Endothelial cell of umbilical vein (primary cell): ENCODE measurements at regions of chr2 and their contacts with region 1.

Region 1: GRCh38 chr2:218659258-218659987 is at the starts of genes BCS1L and ZNF142:
- DNase-seq: peak; percentile 88
- H3K4me3 ChIP-seq: peak within 1 kb of the TSS; percentile 74 to 95 (median 87)
- H3K27ac ChIP-seq: peak within 1 kb of the TSS; percentile 24
- H3K4me1 ChIP-seq: peaks cover 9% of the 10 kb centered on the region
- H3K27me3 ChIP-seq: no peaks in the 10 kb centered on the region
- CTCF ChIP-seq: no peak
- POLR2A ChIP-seq: peak; percentile 73
- total RNA-seq, gene BCS1L: 43.0 and 57.4 TPM in 2 replicates
- total RNA-seq, gene ZNF142: 31.4 and 34.5 TPM in 2 replicates

Region 2: DNA sequence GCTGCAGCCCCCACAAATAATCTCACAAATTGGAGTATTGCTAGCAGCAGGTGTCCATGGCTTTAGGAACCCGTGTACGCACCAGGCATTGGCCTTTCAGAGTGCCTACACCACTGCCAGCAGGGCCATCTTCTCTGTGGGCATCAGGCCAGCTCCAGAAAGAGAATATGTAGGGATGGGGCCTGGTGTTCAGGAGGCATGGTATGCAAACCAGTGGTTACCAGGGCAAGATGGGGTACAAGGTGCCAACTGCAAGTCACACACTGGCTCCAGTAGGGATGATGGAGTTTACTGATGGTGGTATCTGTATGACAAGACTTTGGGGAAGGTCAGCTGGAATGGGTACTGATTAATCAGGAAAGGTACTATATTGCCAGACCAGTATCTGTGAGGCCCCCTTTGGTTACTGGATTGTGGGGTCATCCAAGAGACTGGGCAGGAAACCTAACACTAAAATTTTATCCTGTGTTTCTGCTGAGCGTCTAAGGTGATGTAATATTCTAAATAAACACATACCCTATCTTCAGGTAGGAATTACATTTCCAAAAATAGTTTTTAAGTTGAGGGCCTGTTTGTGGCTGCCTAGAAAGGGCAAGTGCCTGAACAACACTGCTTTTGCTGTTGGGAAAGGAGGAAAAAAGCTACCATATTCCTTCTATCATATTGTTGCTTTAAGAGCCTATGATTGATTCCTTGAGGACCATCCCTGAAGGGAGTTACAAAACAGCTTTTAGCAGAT is 81.8 kb before region 1 on chr2:
- CTCF ChIA-PET with region 1: no interaction called
- POLR2A ChIA-PET with region 1: no interaction called
- dilution Hi-C with region 1: no loop called
- intact Hi-C with region 1: no loop called
- DNase-seq: no peak
- H3K4me3 ChIP-seq: no peak overlapping the region
- H3K27ac ChIP-seq: no peak overlapping the region
- H3K4me1 ChIP-seq: peaks cover 5% of the 10 kb centered on the region
- H3K27me3 ChIP-seq: no peaks in the 10 kb centered on the region
- CTCF ChIP-seq: no peak
- POLR2A ChIP-seq: no peak

Region 3: GRCh38 chr2:218631837-218632236 is 27.6 kb before region 1 on chr2:
- CTCF ChIA-PET with region 1: interaction called, 5 read pairs
- POLR2A ChIA-PET with region 1: interaction called, 3 read pairs
- dilution Hi-C with region 1: no loop called
- intact Hi-C with region 1: loop called (anchors 1 kb)
- DNase-seq: peak; percentile 95
- H3K4me3 ChIP-seq: no peak overlapping the region
- H3K27ac ChIP-seq: peak overlapping the region; percentile 78
- H3K4me1 ChIP-seq: peaks cover 20% of the 10 kb centered on the region
- H3K27me3 ChIP-seq: no peaks in the 10 kb centered on the region
- CTCF ChIP-seq: no peak
- POLR2A ChIP-seq: peak; percentile 59

Region 4: GRCh38 chr2:218671654-218672566 is 12.5 kb after region 1 on chr2 and contains the starts of genes RNF25 and STK36:
- CTCF ChIA-PET with region 1: interaction called, 19 read pairs
- POLR2A ChIA-PET with region 1: interaction called, 5 read pairs
- dilution Hi-C with region 1: no loop called
- intact Hi-C with region 1: loop called (anchors 1 kb)
- DNase-seq: peak; percentile 82
- H3K4me3 ChIP-seq: peak within 1 kb of the TSS; percentile 54 to 87 (median 82)
- H3K27ac ChIP-seq: peak within 1 kb of the TSS; percentile 79
- H3K4me1 ChIP-seq: peaks cover 16% of the 10 kb centered on the region
- H3K27me3 ChIP-seq: no peaks in the 10 kb centered on the region
- CTCF ChIP-seq: no peak
- POLR2A ChIP-seq: peak; percentile 86
- total RNA-seq, gene RNF25: 38.2 and 39.1 TPM in 2 replicates
- total RNA-seq, gene STK36: 34.9 and 40.9 TPM in 2 replicates